GM10248 (cell line): ENCODE measurements at regions of chr1 and their contacts with region 1.

Region 1: DNA sequence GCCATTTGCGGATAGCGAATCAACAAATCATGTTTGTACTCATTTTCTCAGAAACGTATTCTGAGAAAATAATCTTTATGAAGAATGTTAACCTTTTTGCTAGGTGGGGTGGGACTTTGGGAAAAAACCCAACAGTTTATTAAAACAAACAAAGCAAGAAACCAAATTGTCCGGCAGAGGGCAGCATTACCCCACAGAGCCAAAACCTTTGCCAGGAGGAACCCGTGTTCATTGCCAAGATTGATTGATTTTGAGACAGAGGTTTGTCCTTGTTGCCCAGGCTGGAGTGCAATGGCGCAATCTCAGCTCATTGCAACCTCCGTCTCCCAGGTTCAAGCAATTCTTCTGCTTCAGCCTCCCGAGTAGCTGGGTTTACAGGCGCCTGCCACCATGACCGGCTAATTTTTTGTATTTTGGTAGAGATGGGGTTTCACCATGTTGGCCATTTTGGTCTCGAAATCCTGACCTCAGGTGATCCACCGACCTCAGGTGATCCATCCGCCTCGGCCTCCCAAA is 70.8 kb upstream of the RHOU start:
- DNase-seq: peak; percentile 73
- CTCF ChIP-seq: peak; percentile 65

Region 2: GRCh38 chr1:228650147-228650546 is 14.3 kb before region 1 on chr1:
- CTCF ChIA-PET with region 1: interaction called, 13 read pairs
- POLR2A ChIA-PET with region 1: no interaction called
- DNase-seq: no peak
- CTCF ChIP-seq: no peak

Region 3: DNA sequence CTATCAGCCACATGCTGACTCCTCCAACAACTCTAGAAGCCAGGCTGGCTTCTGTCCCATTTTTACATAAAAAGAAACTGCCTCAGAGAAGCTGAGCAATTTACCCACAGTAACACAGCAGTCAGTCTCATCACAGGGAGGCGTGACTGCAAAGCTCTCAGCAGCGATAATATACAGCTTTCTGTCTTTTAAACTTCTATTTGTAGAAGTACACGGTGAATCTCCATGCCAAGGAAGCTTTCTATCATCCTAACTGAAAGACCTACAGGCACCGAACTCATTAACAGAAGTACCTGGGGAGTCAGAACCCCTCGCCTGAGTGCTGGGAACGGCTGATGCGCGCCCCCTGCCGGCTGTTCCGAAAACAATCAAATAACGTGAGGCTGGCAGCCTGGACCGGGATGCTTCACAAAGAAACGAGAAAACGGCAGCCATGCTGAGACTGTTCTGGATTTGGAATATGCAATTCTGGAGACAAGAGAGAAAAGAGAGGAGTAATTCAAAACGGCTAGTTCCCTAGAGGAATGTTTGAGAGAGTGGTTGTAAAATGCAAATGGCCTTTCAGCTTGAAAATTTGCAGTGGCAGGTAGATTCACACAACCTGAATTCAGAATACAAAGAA is 563.0 kb after region 1 on chr1:
- CTCF ChIA-PET with region 1: interaction called, 56 read pairs
- POLR2A ChIA-PET with region 1: no interaction called
- DNase-seq: peak; percentile 77
- CTCF ChIP-seq: peak; percentile 75